PC-3 (cell line): ENCODE measurements at regions of chr6 and their contacts with region 1.

Region 1: DNA sequence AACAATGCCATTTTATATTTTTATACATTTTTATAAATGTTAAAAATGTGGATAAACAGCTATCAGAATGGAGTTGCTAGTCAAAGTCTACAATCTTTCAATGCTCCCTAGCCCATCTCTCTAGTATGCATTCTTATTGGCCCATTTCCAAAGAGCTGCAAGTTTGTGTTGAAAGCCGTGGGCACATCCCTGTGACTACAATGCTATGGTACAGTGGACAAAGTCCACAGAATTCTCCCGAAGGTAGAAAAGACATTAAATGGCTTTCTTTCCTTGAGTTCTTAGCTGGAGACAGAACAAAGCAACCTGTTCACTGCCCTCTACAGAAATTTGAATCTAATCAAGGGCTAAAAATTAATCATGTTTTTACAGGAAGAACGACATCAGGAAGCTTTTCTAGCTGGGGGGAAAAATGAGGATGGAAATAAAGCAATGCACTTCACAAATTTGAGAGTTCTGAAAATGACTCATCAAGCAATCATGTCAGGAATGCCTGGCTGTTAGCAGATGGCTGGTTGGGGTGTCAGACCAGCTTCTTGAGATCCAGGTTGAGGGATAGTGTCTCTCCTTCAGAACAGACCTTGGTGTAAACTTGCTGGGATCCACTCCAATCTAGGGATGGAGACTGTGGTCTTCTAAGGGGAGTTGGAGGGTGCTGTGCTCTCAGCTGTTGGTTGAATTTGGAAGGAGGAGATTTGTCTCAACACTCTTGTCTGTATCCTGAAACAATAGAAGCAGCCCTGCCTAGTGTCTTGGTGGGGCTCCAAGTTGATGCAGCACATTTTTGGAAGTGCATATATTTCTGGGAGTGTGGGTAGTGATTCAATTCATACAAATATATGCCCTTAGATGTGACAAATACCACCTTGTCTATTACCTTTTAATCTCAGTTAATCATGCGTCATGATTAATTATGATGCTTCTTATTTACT is 143.4 kb upstream of the PHACTR1 start:
- DNase-seq: peak; percentile 91
- ATAC-seq: peak; percentile 81
- H3K4me3 ChIP-seq: peak overlapping the region; percentile 23; the same call in 1 of the 2 replicates
- H3K27ac ChIP-seq: no peak overlapping the region
- H3K4me1 ChIP-seq: peaks cover 42% of the 10 kb centered on the region
- H3K27me3 ChIP-seq: no peaks in the 10 kb centered on the region
- CTCF ChIP-seq: no peak

Region 2: GRCh38 chr6:11410539-11411307 is 1162.4 kb before region 1 on chr6:
- CTCF ChIA-PET with region 1: no interaction called
- POLR2A ChIA-PET with region 1: interaction called, 13 read pairs
- intact Hi-C with region 1: no loop called
- DNase-seq: no peak
- ATAC-seq: peak; percentile 20
- H3K4me3 ChIP-seq: no peak overlapping the region
- H3K27ac ChIP-seq: no peak overlapping the region
- H3K4me1 ChIP-seq: peaks cover 18% of the 10 kb centered on the region
- H3K27me3 ChIP-seq: no peaks in the 10 kb centered on the region
- CTCF ChIP-seq: no peak

Region 3: GRCh38 chr6:12483712-12484111 is 89.5 kb before region 1 on chr6:
- CTCF ChIA-PET with region 1: no interaction called
- POLR2A ChIA-PET with region 1: no interaction called
- intact Hi-C with region 1: loop called (anchors 10 kb)
- DNase-seq: peak; percentile 98
- ATAC-seq: peak; percentile 89
- H3K4me3 ChIP-seq: peak overlapping the region; percentile 47
- H3K27ac ChIP-seq: peak overlapping the region; percentile 80
- H3K4me1 ChIP-seq: peaks cover 35% of the 10 kb centered on the region
- H3K27me3 ChIP-seq: no peaks in the 10 kb centered on the region
- CTCF ChIP-seq: no peak